Calu3 (cell line): ENCODE measurements at regions of chr5 and their contacts with region 1.

Region 1: DNA sequence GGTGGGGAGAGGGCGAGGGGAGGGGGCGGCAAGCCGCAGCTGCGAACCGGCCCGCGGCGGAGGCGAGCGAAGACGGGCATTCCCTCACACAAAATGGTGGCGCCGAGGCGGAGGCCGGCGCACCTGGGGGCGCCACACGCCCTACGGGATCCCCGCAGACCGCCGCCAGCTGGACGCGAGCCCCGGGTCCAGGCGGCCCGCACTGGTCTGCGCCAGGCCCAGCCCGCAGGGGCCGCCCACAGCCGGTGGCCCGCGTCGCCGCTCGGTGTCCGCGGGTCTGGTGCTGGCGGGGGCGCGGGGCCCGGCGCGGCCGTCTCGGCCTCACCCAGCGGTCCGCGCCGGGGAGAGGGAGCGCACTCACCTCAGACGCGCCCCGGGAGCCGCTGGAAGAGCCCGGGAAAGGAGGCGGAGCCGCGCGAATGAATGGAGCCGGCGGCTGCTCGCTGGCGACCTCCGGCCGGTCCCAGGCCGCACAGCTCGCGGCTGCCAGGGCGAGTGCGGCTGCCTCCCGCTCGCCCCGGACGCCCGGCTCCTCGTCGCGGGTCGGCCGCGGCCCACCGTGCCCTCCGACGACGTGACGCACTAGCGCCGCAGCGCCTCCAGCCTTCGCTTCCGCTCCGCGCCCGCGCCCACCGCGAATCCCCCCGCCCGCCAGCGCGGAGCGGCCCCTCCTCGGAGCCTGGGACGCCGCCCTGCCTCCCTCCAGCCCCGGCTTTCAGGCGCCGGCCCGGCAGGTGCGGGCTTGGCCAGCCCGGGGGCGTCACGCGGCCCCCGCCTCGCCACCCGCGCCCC is at the start of gene FAM169A:
- DNase-seq: peak; percentile 76
- H3K4me3 Mint-ChIP-seq: peak within 1 kb of the TSS; percentile 86
- H3K27ac Mint-ChIP-seq: peak within 1 kb of the TSS; percentile 85
- H3K4me1 Mint-ChIP-seq: peaks cover 11% of the 10 kb centered on the region
- H3K27me3 Mint-ChIP-seq: no peaks in the 10 kb centered on the region
- CTCF ChIP-seq: no peak
- total RNA-seq, gene FAM169A: 13.4 and 14.1 TPM in 2 replicates

Region 2: GRCh38 chr5:74853256-74853655 is 12.7 kb before region 1 on chr5:
- CTCF ChIA-PET with region 1: interaction called, 13 read pairs
- intact Hi-C with region 1: no loop called
- DNase-seq: no peak
- H3K4me3 Mint-ChIP-seq: no peak overlapping the region
- H3K27ac Mint-ChIP-seq: no peak overlapping the region
- H3K4me1 Mint-ChIP-seq: no peaks in the 10 kb centered on the region
- H3K27me3 Mint-ChIP-seq: no peaks in the 10 kb centered on the region
- CTCF ChIP-seq: no peak

Region 3: DNA sequence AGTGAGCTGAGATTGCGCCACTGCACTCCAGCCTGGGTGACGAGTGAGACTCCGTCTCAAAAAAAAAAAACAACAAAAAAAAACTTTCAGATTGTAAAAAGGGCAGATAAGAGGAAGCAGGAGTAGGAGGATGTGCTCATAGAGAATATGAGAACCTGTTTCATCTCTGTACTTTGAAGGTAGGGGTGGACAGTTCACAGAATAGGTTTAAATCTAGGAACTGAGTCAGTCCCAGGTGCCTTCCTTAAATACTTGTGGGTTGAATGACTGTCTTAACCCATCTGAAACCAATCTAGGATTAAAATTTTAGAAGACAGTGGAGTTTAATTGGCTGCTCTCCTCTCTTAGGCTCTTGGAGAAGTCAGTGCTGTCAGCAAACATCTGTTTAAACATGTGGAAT is 658.1 kb after region 1 on chr5:
- CTCF ChIA-PET with region 1: no interaction called
- intact Hi-C with region 1: no loop called
- DNase-seq: no peak
- H3K4me3 Mint-ChIP-seq: no peak overlapping the region
- H3K27ac Mint-ChIP-seq: no peak overlapping the region
- H3K4me1 Mint-ChIP-seq: peaks cover 25% of the 10 kb centered on the region
- H3K27me3 Mint-ChIP-seq: no peaks in the 10 kb centered on the region
- CTCF ChIP-seq: no peak